ENCODE measurements at regions of chr10 and their contacts with region 1.

Region 1: GRCh38 chr10:125976960-125977603 is 80.7 kb downstream of the FANK1 start:
- DNase-seq: peak in 2 of 3 donors; percentile 15 to 23
- H3K4me3 ChIP-seq: no peak overlapping the region
- H3K27ac ChIP-seq: no peak overlapping the region
- H3K4me1 ChIP-seq: peaks cover 2 to 12% (median 3%) of the 10 kb centered on the region in 4 experiments
- H3K27me3 ChIP-seq: no peaks in the 10 kb centered on the region

Region 2: GRCh38 chr10:125928928-125929585 is 48.0 kb before region 1 on chr10:
- CTCF ChIA-PET with region 1: interaction called, 14 read pairs
- POLR2A ChIA-PET with region 1: no interaction called
- DNase-seq: no peak
- H3K4me3 ChIP-seq: no peak overlapping the region
- H3K27ac ChIP-seq: no peak overlapping the region
- H3K4me1 ChIP-seq: no peaks in the 10 kb centered on the region
- H3K27me3 ChIP-seq: peaks cover 0 to 1% (median 0%) of the 10 kb centered on the region in 5 experiments

Measured in common myeloid progenitor, CD34-positive (primary cell).